A549 (cell line): ENCODE measurements at regions of chr3 and their contacts with region 1.

Region 1: DNA sequence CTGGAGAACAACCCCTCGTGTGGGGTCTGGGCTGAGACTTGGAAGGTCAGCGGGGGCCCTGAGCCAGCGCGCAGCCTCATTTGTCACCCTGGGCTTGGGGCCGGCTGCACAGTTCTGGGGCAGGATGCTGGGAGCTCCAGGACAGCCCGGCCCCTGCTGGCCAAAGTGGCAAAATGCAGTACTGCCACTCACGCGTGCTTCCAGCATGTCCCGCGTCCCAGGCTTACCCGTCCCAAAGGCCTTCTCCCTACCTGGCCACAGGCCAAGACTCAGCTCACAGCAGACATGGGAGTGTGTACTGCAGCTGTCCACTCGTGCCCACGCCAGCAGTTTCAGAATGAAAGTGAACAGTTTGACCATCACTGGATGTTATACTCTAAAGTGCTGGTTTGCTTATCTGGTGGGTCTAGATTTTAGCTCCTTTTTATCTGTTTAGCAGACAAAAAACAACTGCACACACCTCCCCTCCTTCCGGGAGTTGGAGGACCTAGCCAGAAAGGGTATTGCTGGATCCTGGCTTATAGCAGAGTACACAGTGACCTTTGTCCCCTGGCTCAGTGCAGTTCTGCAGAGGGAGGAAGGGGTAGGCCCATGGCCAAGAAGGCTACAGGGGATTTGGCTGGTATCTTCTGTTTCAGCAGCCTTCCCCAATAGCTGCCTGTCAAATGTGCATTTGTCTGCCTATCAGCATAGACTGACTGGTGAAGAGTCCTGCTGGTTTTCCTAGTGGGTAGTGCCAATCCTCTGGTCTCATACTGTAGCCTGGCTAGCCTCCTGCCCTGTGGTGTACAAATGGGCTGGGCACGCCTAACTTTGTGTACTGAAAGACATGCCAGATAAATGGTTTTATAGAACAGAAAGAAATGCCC is 23.2 kb upstream of the IP6K2 start:
- DNase-seq: peak; percentile 82 to 87
- ATAC-seq: peak; percentile 96 to 98
- H3K4me3 ChIP-seq: no peak overlapping the region
- H3K27ac ChIP-seq: peak overlapping the region; percentile 82 to 86
- H3K4me1 ChIP-seq: peaks cover 20% of the 10 kb centered on the region
- CTCF ChIP-seq: peak; percentile 60
- EP300 ChIP-seq: no peak
- POLR2A ChIP-seq: no peak
- RAD21 ChIP-seq: peak; percentile 49 to 52

Region 2: GRCh38 chr3:48543271-48543866 is 196.8 kb before region 1 on chr3:
- CTCF ChIA-PET with region 1: no interaction called
- POLR2A ChIA-PET with region 1: no interaction called
- DNase-seq: no peak
- ATAC-seq: peak; percentile 16 to 25; a peak in 2 of 6 replicates
- H3K4me3 ChIP-seq: no peak overlapping the region
- H3K27ac ChIP-seq: no peak overlapping the region
- H3K4me1 ChIP-seq: no peaks in the 10 kb centered on the region
- CTCF ChIP-seq: no peak
- EP300 ChIP-seq: no peak
- POLR2A ChIP-seq: no peak
- RAD21 ChIP-seq: no peak

Region 3: DNA sequence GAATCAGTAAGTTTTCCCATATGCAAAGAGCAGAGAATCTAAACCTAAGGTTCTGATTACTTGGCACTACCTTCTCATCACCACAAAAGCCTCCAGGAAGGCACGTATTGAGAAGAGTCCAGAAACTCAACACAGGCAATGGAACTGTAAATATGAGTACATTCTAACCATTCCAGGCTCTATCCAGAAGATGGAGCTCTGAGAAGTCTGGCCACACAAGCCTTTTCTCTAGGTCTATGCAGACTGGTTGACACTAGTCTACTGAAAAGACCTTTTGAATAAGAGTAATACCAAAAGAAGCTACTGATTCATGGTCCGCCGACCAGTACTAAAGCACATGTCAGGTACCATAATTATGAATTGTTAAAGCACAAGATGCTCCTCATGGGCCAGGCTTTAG is 42.2 kb before region 1 on chr3:
- CTCF ChIA-PET with region 1: interaction called, 11 read pairs
- POLR2A ChIA-PET with region 1: no interaction called
- DNase-seq: no peak
- ATAC-seq: peak; percentile 63 to 64; a peak in 4 of 6 replicates
- H3K4me3 ChIP-seq: no peak overlapping the region
- H3K27ac ChIP-seq: no peak overlapping the region
- H3K4me1 ChIP-seq: peaks cover 37% of the 10 kb centered on the region
- CTCF ChIP-seq: no peak
- EP300 ChIP-seq: no peak
- POLR2A ChIP-seq: no peak
- RAD21 ChIP-seq: no peak

Region 4: DNA sequence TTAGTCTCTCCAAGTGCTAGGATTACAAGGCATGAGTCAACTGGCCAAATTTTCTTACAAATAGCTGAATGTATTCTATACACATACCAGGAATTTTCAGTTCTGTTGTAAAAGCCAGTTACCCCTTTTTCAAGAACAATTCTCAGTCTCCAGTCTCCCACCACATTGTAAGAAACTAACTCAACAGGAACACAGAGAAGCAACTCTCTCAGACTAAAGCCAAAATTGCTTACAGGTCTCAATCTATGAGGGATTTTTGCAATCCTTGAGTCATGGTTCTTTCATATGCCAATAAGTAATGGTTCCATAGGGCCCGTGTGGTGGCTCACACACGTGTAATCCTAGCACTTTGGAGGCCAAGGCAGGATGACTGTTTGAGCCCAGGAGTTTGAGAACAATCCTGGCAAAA is 31.7 kb before region 1 on chr3:
- CTCF ChIA-PET with region 1: interaction called, 18 read pairs
- POLR2A ChIA-PET with region 1: no interaction called
- DNase-seq: no peak
- ATAC-seq: peak in 1 of 2 experiments; percentile 19; a peak in 2 of 6 replicates
- H3K4me3 ChIP-seq: no peak overlapping the region
- H3K27ac ChIP-seq: peak overlapping the region; percentile 31 to 70; a peak in 5 of 6 replicates
- H3K4me1 ChIP-seq: peaks cover 13% of the 10 kb centered on the region; the same call in 2 of the 3 replicates
- CTCF ChIP-seq: no peak
- EP300 ChIP-seq: no peak
- POLR2A ChIP-seq: no peak
- RAD21 ChIP-seq: no peak

Region 5: DNA sequence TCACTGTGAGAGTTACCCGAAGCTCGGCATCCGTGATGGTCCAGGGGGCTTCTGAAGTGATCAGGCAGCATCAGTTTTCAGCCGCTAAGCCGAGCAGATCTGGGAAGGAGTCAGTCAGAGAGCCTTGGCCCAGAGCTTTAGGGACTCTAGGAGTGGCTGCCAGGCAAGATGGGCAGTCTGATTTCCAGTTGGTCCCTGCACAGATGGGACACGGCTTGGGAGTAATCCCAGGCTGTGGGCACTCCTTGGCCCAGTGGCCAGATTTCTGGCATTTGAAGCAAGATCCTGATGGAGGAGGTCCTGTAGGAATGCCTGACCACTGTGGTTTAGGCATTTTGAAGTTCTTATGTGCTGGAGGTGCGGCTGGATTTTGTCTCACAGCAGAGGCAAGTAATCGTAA is 12.7 kb before region 1 on chr3:
- CTCF ChIA-PET with region 1: interaction called, 13 read pairs
- POLR2A ChIA-PET with region 1: no interaction called
- DNase-seq: no peak
- ATAC-seq: no peak
- H3K4me3 ChIP-seq: no peak overlapping the region
- H3K27ac ChIP-seq: no peak overlapping the region
- H3K4me1 ChIP-seq: peaks cover 11% of the 10 kb centered on the region; the same call in 2 of the 3 replicates
- CTCF ChIP-seq: no peak
- EP300 ChIP-seq: no peak
- POLR2A ChIP-seq: no peak
- RAD21 ChIP-seq: no peak